BJ (cell line): ENCODE measurements at regions of chr17 and their contacts with region 1.

Region 1: DNA sequence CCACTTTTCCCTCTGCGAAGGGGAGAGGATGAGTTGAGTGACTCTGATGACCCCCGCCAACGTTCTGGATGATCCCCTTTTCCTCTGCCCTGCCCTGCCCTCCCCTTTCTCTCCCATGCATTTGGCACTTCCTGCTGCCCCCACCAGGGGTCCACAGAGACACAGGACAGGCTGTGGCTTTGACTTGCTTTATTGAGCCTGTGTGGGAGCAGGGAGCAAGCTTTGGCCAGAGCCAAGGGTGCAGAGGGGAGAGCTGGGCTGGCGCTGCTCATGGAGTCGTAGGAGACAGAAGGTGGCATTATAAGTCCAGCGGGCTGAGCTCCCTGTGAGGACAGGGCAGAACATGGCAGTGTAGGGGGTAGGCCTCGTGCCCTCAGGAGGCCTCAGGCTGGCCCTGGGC is 1.6 kb downstream of the PPY start:
- DNase-seq: no peak
- H3K4me3 ChIP-seq: no peak overlapping the region
- H3K27me3 ChIP-seq: peaks cover 8% of the 10 kb centered on the region; the same call in 1 of the 2 replicates
- CTCF ChIP-seq: peak; percentile 73

Region 2: GRCh38 chr17:43927060-43927864 is 13.4 kb before region 1 on chr17:
- CTCF ChIA-PET with region 1: interaction called, 27 read pairs
- POLR2A ChIA-PET with region 1: no interaction called
- DNase-seq: no peak
- H3K4me3 ChIP-seq: no peak overlapping the region
- H3K27me3 ChIP-seq: peaks cover 27% of the 10 kb centered on the region
- CTCF ChIP-seq: no peak

Region 3: DNA sequence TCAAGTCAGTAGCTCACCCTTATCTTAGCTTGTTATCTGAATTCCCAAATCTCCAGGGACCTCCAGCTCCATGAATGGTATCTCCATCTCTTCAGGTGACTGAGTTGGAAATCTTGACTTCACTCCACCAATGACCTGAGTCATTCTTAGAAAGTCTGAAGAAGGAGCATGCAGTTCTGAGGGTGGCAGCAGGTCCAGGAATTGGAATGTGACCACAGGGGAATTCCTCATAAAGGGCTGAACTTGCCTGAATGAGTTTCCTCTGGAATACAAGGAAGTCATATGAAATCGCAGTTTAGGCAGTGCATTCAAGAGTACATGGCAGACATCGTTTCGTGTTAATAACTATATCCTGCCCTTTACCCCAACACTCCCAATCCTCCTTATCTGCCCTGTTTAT is 25.6 kb after region 1 on chr17:
- CTCF ChIA-PET with region 1: interaction called, 13 read pairs
- POLR2A ChIA-PET with region 1: no interaction called
- DNase-seq: no peak
- H3K4me3 ChIP-seq: no peak overlapping the region
- H3K27me3 ChIP-seq: peaks cover 4% of the 10 kb centered on the region; the same call in 1 of the 2 replicates
- CTCF ChIP-seq: no peak

Region 4: GRCh38 chr17:43994272-43995149 is 53.9 kb after region 1 on chr17:
- CTCF ChIA-PET with region 1: interaction called, 108 read pairs
- POLR2A ChIA-PET with region 1: no interaction called
- DNase-seq: no peak
- H3K4me3 ChIP-seq: peak overlapping the region; percentile 33
- H3K27me3 ChIP-seq: peaks cover 5% of the 10 kb centered on the region
- CTCF ChIP-seq: peak; percentile 89